ENCODE measurements at regions of chr14 and their contacts with region 1.

Region 1: GRCh38 chr14:65164068-65164824 is 61.9 kb upstream of the MAX start:
- DNase-seq: peak; percentile 44
- CTCF ChIP-seq: peak; percentile 67

Region 2: GRCh38 chr14:65613131-65613650 is 448.9 kb after region 1 on chr14:
- in situ Hi-C with region 1: no loop called
- DNase-seq: no peak
- CTCF ChIP-seq: no peak

Region 3: GRCh38 chr14:65824285-65824977 is 660.2 kb after region 1 on chr14:
- in situ Hi-C with region 1: loop called (anchors 10 kb)
- DNase-seq: peak; percentile 78
- CTCF ChIP-seq: peak; percentile 95

Region 4: GRCh38 chr14:65958664-65959562 is 794.7 kb after region 1 on chr14:
- in situ Hi-C with region 1: loop called (anchors 10 kb)
- DNase-seq: peak; percentile 42
- CTCF ChIP-seq: peak; percentile 52